Astrocyte of the cerebellum (primary cell): ENCODE measurements at regions of chr10 and their contacts with region 1.

Region 1: GRCh38 chr10:124389613-124390361 is 28.9 kb downstream of the OAT start:
- DNase-seq: no peak
- H3K4me3 ChIP-seq: no peak overlapping the region
- CTCF ChIP-seq: no peak

Region 2: DNA sequence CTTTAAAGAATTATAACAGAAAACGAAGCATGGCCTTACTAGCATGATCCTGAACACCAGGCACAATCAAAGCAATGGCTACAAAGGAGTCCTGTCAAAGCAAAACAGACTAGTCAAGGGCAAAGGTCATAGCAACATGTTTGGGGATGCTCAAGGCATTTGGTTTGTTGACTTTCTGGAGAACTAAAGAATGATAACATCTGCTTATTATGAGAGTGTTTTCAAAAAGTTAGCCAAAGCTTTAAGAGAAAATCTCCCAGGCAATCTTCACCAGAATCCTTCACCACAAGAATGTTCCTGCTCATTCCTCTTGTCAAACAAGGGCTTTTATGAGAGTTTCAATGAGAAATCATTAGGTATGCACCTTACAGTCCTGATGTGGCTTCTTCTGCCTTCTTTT is 403.0 kb before region 1 on chr10:
- in situ Hi-C with region 1: loop called (anchors 5 kb)
- DNase-seq: no peak
- H3K4me3 ChIP-seq: no peak overlapping the region
- CTCF ChIP-seq: no peak

Region 3: DNA sequence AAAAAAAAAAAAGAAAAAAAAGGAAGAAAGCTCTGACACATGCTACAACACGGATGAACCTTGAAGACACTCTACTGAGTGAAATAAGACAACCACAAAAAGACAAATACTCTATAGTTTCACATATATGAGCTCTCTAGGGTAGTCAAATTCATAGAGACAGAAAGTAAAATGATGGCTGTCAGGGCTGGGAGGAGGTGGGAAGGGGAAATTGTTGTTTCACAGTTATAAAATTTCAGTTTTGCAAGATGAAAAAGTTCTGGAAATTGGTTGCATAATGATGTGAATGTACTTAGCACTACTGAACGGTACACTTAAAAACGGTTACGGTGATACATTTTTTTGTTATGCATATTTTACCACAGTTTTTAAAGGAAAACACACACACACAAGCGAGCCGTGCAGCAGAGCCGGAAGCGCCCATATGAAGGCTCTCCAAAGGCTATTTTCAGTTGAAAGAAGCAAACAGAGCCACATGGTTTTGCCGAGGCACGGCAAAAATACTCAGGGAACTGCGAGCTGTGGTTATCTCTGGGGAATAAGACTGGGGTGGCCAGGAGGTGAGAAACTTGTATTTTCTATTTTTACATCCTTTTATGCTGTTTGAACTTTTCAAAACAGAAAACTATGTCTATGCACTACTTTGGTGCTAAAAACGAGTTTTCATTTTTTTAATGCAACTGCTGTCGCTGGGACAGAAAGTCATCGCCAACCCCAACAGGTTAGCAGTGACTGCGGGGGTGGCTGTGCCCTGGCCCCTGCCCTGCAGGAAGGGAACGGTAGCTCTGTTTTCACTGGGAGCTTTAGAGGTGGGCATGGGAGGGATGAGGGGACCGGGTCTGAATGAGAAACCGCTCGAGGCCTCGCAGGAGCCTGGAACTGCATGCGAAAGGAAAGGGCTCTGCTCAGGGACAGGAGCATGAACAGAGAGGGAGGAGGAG is 103.9 kb before region 1 on chr10:
- in situ Hi-C with region 1: no loop called
- DNase-seq: no peak
- H3K4me3 ChIP-seq: no peak overlapping the region
- CTCF ChIP-seq: no peak